Activated CD4-positive, alpha-beta T cell treated with anti-CD3 and anti-CD28 coated beads for 36 hours (primary cell): ENCODE measurements at regions of chr1 and their contacts with region 1.

Region 1: DNA sequence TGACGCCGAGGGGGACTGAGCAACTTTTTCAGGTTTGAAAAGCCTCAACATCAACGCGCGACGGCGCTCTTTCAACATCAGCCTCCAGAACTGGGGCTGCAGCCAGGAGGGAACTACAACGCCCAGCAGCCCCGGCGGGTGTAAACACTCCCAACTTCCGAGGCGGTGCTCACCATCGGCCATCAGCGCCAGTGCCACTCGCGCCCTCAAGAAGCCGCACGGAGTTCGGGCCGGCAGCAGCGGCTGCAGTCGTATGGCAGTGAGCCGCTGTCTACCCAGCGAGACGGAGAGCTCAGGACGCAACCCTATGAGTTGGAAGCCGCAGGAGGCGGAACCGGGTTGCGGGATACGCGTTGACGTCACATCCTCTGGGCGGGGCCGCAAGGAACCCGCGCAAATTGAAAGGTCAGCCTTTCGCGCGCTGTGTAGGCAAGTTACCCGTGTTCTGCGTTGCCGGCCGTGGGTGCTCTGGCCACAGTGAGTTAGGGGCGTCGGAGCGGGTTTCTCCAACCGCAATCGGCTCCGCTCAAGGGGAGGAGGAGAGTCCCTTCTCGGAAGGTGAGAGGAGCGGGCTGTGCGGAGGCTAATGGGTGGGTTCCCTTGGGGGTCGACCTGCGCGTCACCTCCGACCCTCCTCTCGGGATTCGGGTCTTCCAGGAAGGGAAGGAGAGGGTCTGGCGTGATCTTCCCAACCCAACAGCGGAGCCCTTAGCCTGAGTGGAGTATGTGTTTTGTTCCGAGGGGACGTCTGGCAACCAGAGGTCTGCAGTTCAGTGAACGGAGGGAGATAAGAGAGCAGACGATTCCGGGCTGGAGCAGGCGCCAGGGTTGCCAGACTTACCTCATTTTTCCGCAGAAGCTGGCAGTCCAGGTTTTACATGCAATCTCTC is at the start of gene EXO1:
- DNase-seq: peak; percentile 95
- ATAC-seq: peak; percentile 97
- H3K4me3 Mint-ChIP-seq: peak within 1 kb of the TSS; percentile 99
- H3K27ac Mint-ChIP-seq: peak within 1 kb of the TSS; percentile 99
- H3K4me1 Mint-ChIP-seq: peaks cover 14% of the 10 kb centered on the region
- H3K27me3 Mint-ChIP-seq: no peaks in the 10 kb centered on the region
- total RNA-seq, gene EXO1: 53.8 to 57.8 TPM

Region 2: DNA sequence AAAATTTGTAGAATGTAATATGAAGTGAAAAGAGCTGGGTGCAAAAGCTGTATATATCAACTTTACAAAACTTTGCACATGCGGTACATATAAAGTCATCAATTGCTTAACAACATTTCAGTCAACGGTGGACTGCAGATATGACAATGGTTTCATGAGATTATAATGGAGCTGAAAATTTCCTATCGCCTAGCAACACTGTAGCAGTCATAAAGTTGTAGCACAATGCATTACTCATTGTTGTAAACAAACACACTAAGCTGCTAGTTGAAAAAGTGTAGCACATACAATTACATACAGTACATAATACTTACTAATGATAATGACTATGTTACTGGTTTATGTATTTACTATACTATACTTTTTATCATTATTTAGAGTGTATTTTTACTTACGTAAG is 555.1 kb before region 1 on chr1:
- CTCF ChIA-PET with region 1: no interaction called
- POLR2A ChIA-PET with region 1: no interaction called
- intact Hi-C with region 1: no loop called
- DNase-seq: no peak
- ATAC-seq: no peak
- H3K4me3 Mint-ChIP-seq: no peak overlapping the region
- H3K27ac Mint-ChIP-seq: no peak overlapping the region
- H3K4me1 Mint-ChIP-seq: no peaks in the 10 kb centered on the region
- H3K27me3 Mint-ChIP-seq: no peaks in the 10 kb centered on the region

Region 3: GRCh38 chr1:241519308-241520079 is 328.5 kb before region 1 on chr1 and contains the start of gene FH:
- CTCF ChIA-PET with region 1: interaction called, 5 read pairs
- POLR2A ChIA-PET with region 1: no interaction called
- intact Hi-C with region 1: loop called (anchors 1 kb)
- DNase-seq: peak; percentile 96
- ATAC-seq: peak; percentile 98
- H3K4me3 Mint-ChIP-seq: peak within 1 kb of the TSS; percentile 86
- H3K27ac Mint-ChIP-seq: peak within 1 kb of the TSS; percentile 87
- H3K4me1 Mint-ChIP-seq: peaks cover 21% of the 10 kb centered on the region
- H3K27me3 Mint-ChIP-seq: peaks cover 23% of the 10 kb centered on the region
- total RNA-seq, gene FH: 80.2 to 94.3 TPM

Region 4: GRCh38 chr1:241688940-241689368 is 159.1 kb before region 1 on chr1:
- CTCF ChIA-PET with region 1: no interaction called
- POLR2A ChIA-PET with region 1: no interaction called
- intact Hi-C with region 1: no loop called
- DNase-seq: no peak
- ATAC-seq: no peak
- H3K4me3 Mint-ChIP-seq: no peak overlapping the region
- H3K27ac Mint-ChIP-seq: no peak overlapping the region
- H3K4me1 Mint-ChIP-seq: no peaks in the 10 kb centered on the region
- H3K27me3 Mint-ChIP-seq: peaks cover 7% of the 10 kb centered on the region

Region 5: GRCh38 chr1:241716915-241717656 is 131.0 kb before region 1 on chr1:
- CTCF ChIA-PET with region 1: no interaction called
- POLR2A ChIA-PET with region 1: no interaction called
- intact Hi-C with region 1: loop called in 1 of 2 experiments (anchors 5 kb)
- DNase-seq: peak; percentile 46
- ATAC-seq: peak; percentile 94
- H3K4me3 Mint-ChIP-seq: no peak overlapping the region
- H3K27ac Mint-ChIP-seq: no peak overlapping the region
- H3K4me1 Mint-ChIP-seq: peaks cover 19% of the 10 kb centered on the region
- H3K27me3 Mint-ChIP-seq: peaks cover 11% of the 10 kb centered on the region

Region 6: DNA sequence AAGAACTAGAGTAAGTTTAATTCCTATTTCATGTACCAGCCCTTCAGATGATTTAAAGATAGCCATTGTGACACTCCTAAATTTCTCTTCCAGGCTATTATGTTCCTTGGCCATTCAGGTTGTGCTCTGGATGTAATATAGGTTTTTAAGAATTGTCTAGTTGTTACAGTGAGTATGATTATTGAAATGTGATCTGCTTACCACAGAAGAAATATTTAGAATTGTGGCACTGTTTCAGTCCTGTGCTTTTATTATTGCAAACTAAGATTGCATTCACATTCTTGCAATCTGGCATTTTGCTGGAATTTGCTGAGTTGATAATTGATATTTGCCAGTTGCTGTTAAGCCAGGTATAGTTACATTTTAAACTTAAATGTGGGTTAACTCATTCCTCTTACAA is 22.2 kb after region 1 on chr1:
- CTCF ChIA-PET with region 1: no interaction called
- POLR2A ChIA-PET with region 1: no interaction called
- intact Hi-C with region 1: no loop called
- DNase-seq: no peak
- ATAC-seq: no peak
- H3K4me3 Mint-ChIP-seq: no peak overlapping the region
- H3K27ac Mint-ChIP-seq: no peak overlapping the region
- H3K4me1 Mint-ChIP-seq: no peaks in the 10 kb centered on the region
- H3K27me3 Mint-ChIP-seq: no peaks in the 10 kb centered on the region

Region 7: DNA sequence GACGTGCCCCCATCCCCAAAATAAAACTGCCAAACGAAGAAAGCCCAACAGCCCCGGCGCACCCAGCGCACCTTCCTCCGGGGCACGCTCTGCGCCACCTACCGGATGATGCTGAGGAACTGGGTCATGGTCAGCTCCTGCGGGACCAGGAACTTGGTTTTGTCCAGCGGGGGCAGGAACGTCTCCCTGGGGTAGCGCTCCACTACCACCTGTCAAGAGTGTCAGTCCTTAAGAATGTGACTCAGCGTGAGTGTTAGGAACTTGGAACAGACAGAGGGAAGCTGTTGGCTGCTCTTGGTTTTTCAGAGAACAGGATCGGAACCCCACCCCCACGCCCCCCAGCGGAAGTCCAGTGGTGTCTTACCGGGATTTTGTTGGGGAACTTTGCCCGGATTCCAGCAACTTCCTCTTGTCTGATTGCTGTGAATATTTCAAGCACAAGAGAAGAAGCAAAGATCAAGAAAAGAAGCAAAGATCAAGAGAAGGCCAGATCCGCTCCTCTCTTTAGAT is 150.4 kb after region 1 on chr1:
- CTCF ChIA-PET with region 1: no interaction called
- POLR2A ChIA-PET with region 1: no interaction called
- intact Hi-C with region 1: loop called (anchors 1 to 5 kb)
- DNase-seq: peak; percentile 74
- ATAC-seq: peak; percentile 78
- H3K4me3 Mint-ChIP-seq: peak overlapping the region; percentile 35
- H3K27ac Mint-ChIP-seq: no peak overlapping the region
- H3K4me1 Mint-ChIP-seq: peaks cover 4% of the 10 kb centered on the region
- H3K27me3 Mint-ChIP-seq: peaks cover 4% of the 10 kb centered on the region

Region 8: GRCh38 chr1:242477944-242478343 is 629.9 kb after region 1 on chr1:
- CTCF ChIA-PET with region 1: no interaction called
- POLR2A ChIA-PET with region 1: no interaction called
- intact Hi-C with region 1: no loop called
- DNase-seq: no peak
- ATAC-seq: no peak
- H3K4me3 Mint-ChIP-seq: no peak overlapping the region
- H3K27ac Mint-ChIP-seq: no peak overlapping the region
- H3K4me1 Mint-ChIP-seq: no peaks in the 10 kb centered on the region
- H3K27me3 Mint-ChIP-seq: peaks cover 9% of the 10 kb centered on the region